CD4-positive, alpha-beta T cell (primary cell): ENCODE measurements at regions of chr18 and their contacts with region 1.

Region 1: GRCh38 chr18:23967321-23968089 is 47.0 kb upstream of the TTC39C start:
- DNase-seq: peak in 5 of 14 experiments; percentile 10 to 83 (median 48)
- ATAC-seq: no peak
- H3K4me3 ChIP-seq: no peak overlapping the region
- H3K4me3 Mint-ChIP-seq: no peak overlapping the region
- H3K27ac ChIP-seq: no peak overlapping the region
- H3K27ac Mint-ChIP-seq: peak overlapping the region; percentile 95
- H3K4me1 ChIP-seq: peaks cover 86% of the 10 kb centered on the region
- H3K4me1 Mint-ChIP-seq: peaks cover 82% of the 10 kb centered on the region
- H3K27me3 ChIP-seq: no peaks in the 10 kb centered on the region
- H3K27me3 Mint-ChIP-seq: no peaks in the 10 kb centered on the region
- CTCF ChIP-seq: no peak

Region 2: GRCh38 chr18:23986600-23987359 is 19.3 kb after region 1 on chr18:
- CTCF ChIA-PET with region 1: interaction called, 3 read pairs
- POLR2A ChIA-PET with region 1: interaction called, 24 read pairs
- intact Hi-C with region 1: loop called in 1 of 2 experiments (anchors 2 kb)
- DNase-seq: no peak
- ATAC-seq: no peak
- H3K4me3 ChIP-seq: no peak overlapping the region
- H3K4me3 Mint-ChIP-seq: no peak overlapping the region
- H3K27ac ChIP-seq: no peak overlapping the region
- H3K27ac Mint-ChIP-seq: no peak overlapping the region
- H3K4me1 ChIP-seq: peaks cover 18% of the 10 kb centered on the region
- H3K4me1 Mint-ChIP-seq: peaks cover 47% of the 10 kb centered on the region
- H3K27me3 ChIP-seq: no peaks in the 10 kb centered on the region
- H3K27me3 Mint-ChIP-seq: no peaks in the 10 kb centered on the region
- CTCF ChIP-seq: no peak

Region 3: GRCh38 chr18:23994361-23994902 is 26.9 kb after region 1 on chr18:
- CTCF ChIA-PET with region 1: interaction called, 3 read pairs
- POLR2A ChIA-PET with region 1: interaction called, 24 read pairs
- intact Hi-C with region 1: loop called in 1 of 2 experiments (anchors 1 kb)
- DNase-seq: peak in 9 of 14 experiments; percentile 20 to 66 (median 42)
- ATAC-seq: peak; percentile 18
- H3K4me3 ChIP-seq: peak overlapping the region; percentile 50
- H3K4me3 Mint-ChIP-seq: peak overlapping the region; percentile 78
- H3K27ac ChIP-seq: peak overlapping the region; percentile 32 to 82
- H3K27ac Mint-ChIP-seq: peak overlapping the region; percentile 95
- H3K4me1 ChIP-seq: peaks cover 58% of the 10 kb centered on the region
- H3K4me1 Mint-ChIP-seq: peaks cover 75% of the 10 kb centered on the region
- H3K27me3 ChIP-seq: no peaks in the 10 kb centered on the region
- H3K27me3 Mint-ChIP-seq: no peaks in the 10 kb centered on the region
- CTCF ChIP-seq: no peak